Activated CD4-positive, alpha-beta memory T cell treated with anti-CD3 and anti-CD28 coated beads, Interleukin-2, amount 10 ng/mL, durations not matched to agents 7 days and 5 days (primary cell): ENCODE measurements at regions of chr5 and their contacts with region 1.

Region 1: GRCh38 chr5:57137401-57137800 is 36.5 kb upstream of the GPBP1 start:
- DNase-seq: no peak
- H3K4me3 Mint-ChIP-seq: no peak overlapping the region
- H3K27ac Mint-ChIP-seq: no peak overlapping the region
- H3K4me1 Mint-ChIP-seq: no peaks in the 10 kb centered on the region
- H3K27me3 Mint-ChIP-seq: peaks cover 8% of the 10 kb centered on the region

Region 2: GRCh38 chr5:56900858-56901578 is 236.4 kb before region 1 on chr5:
- CTCF ChIA-PET with region 1: interaction called, 74 read pairs
- POLR2A ChIA-PET with region 1: interaction called, 3 read pairs
- DNase-seq: peak; percentile 25
- H3K4me3 Mint-ChIP-seq: no peak overlapping the region
- H3K27ac Mint-ChIP-seq: no peak overlapping the region
- H3K4me1 Mint-ChIP-seq: no peaks in the 10 kb centered on the region
- H3K27me3 Mint-ChIP-seq: peaks cover 9% of the 10 kb centered on the region

Region 3: DNA sequence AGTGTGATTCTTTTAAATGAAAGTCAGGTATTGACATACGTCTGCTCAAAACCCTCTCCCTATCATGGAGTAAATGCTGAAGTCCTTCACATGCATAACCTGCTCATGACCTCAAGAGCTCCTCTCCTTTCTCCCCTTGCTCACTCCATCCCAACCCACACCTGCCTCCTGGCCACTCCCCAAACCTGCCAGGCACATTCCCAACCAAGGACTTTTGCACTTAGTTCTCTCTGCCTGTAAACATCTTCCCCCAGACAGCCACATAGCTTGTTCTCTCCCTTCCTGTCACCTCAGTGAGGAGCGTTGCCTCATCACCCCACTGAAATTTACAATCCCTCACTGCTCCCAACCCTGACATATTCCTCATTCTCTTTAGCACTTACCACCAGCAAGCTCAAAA is 219.3 kb before region 1 on chr5:
- CTCF ChIA-PET with region 1: interaction called, 20 read pairs
- POLR2A ChIA-PET with region 1: no interaction called
- DNase-seq: no peak
- H3K4me3 Mint-ChIP-seq: no peak overlapping the region
- H3K27ac Mint-ChIP-seq: no peak overlapping the region
- H3K4me1 Mint-ChIP-seq: peaks cover 6% of the 10 kb centered on the region
- H3K27me3 Mint-ChIP-seq: no peaks in the 10 kb centered on the region

Region 4: DNA sequence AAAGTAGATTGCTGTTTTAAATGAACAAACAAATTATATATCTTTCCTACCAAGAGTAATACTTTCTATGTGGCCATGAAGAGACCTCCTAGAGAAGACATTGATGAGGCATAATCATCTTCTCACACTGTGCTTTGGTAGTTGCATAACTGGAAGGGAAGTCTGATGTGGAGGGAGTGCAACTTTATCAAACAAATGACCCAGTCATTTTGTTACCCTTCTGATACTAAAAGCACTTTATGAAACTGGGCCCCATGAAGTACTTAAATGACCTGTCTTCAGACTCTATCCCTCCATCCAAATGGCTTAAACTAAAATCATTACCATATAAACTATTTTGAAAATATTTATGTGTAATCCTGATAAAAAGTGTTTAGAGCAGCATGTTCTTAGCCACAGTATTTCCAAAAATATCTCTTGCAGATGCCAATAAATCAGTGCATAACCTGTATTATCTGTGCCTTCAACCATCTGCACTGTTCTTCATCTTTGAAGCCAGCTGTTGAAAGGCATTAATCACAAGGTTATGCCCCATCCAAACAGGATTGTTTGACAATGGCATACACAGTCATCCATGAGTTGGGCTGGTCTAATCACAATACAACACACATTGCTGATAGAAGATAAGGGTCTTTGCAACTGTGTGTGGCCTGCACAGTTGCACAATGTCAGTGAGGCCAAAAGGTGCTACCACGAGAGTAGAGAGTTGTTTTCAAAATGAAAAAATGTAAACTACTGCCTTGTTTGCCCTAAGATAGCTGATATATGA is 153.6 kb before region 1 on chr5:
- CTCF ChIA-PET with region 1: no interaction called
- POLR2A ChIA-PET with region 1: no interaction called
- DNase-seq: no peak
- H3K4me3 Mint-ChIP-seq: no peak overlapping the region
- H3K27ac Mint-ChIP-seq: no peak overlapping the region
- H3K4me1 Mint-ChIP-seq: peaks cover 27% of the 10 kb centered on the region
- H3K27me3 Mint-ChIP-seq: peaks cover 3% of the 10 kb centered on the region

Region 5: DNA sequence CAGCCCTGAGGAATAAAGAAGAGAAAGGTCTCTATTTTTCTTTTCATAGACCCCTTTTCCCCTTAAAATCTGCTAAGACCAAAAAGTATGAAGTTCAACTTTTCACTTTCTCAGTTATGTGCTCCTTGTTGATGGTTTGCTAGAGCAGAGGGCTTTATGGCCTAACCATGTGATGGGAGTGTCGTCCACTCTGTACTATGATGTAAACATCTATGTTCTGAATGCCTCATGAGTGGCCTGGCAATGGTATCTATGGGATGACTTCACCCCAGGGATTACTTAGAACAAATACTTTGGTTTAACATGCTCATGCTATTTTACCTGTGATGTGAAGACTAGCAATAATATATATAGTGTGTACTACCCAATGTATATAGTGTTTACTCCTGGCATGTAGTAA is 141.8 kb before region 1 on chr5:
- CTCF ChIA-PET with region 1: interaction called, 11 read pairs
- POLR2A ChIA-PET with region 1: no interaction called
- DNase-seq: no peak
- H3K4me3 Mint-ChIP-seq: no peak overlapping the region
- H3K27ac Mint-ChIP-seq: no peak overlapping the region
- H3K4me1 Mint-ChIP-seq: no peaks in the 10 kb centered on the region
- H3K27me3 Mint-ChIP-seq: peaks cover 10% of the 10 kb centered on the region

Region 6: DNA sequence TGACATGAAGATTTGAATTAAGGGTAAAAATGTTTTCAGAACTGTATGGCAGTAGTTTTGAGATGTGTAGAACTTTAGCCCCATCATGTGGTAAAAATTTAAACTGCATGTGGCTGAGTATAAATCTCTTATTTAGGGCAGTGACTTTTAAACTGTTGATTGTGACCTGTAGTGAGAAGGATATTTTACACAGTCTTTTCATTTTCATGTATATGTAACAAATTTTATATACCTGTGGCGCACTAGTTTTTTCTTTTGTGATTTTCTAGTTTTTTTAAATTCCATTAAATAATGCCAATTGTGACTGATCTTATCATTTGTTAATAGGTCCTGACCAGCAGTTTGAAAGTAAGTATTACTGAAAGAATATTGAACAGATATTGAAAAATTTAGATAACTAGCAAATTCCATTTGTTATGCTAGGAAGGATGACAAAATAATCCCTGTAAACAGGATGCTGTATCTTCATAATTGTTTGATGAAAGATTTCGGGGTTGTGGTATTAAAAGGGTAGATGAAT is 83.7 kb after region 1 on chr5:
- CTCF ChIA-PET with region 1: interaction called, 41 read pairs
- POLR2A ChIA-PET with region 1: no interaction called
- DNase-seq: no peak
- H3K4me3 Mint-ChIP-seq: no peak overlapping the region
- H3K27ac Mint-ChIP-seq: peak overlapping the region; percentile 43
- H3K4me1 Mint-ChIP-seq: peaks cover 32% of the 10 kb centered on the region
- H3K27me3 Mint-ChIP-seq: no peaks in the 10 kb centered on the region